Gastrocnemius medialis (tissue), 4 donors: ENCODE measurements at regions of chr1 and their contacts with region 1.

Region 1: DNA sequence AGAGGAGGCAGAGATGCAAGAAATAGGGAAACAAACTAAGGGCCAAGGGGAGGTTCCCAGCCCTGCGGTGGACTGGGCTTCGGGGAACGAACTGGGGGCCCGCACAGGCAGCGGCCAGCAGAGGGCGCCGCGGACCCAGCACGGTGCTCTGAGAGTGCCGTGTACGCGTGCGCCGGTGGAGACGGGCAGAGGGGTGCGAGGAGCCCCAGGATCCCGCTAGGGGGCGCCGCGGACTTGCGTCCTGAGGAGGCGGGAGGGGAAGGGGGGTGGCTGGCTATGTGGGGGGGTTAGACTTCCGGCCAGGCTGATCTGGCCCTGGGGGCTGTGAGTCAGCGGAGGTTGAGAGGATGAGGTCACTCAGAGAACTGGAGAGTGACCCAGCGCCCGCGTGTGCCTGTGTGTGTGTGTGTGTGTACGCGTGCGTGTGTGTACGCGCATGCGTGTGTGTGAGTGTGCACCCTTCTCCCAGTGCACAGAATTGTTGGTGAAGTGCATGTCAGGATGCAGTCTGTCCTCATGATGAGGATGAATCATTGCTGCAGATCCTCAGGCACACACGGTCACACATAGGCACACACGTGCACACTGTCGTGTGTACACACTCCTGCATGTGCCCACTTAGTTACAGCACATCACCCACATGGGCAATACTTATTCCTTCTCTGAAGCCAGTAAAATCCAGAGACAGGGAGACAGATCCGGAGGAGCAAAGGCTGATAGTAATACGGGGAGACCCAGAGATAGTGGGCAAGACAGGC is 17.0 kb downstream of the NES start:
- DNase-seq: peak; percentile 89 to 95
- ATAC-seq: peak; percentile 58 to 59
- H3K4me3 ChIP-seq: peak overlapping the region in 1 of 4 donors; percentile 46
- H3K27ac ChIP-seq: peak overlapping the region; percentile 91 to 97 (median 94)
- H3K4me1 ChIP-seq: peaks cover 72% of the 10 kb centered on the region in 2 donors
- H3K27me3 ChIP-seq: peaks cover 8 to 14% (median 14%) of the 10 kb centered on the region in 3 donors
- CTCF ChIP-seq: peak; percentile 99 to 100 (median 100)
- POLR2A ChIP-seq: no peak

Region 2: DNA sequence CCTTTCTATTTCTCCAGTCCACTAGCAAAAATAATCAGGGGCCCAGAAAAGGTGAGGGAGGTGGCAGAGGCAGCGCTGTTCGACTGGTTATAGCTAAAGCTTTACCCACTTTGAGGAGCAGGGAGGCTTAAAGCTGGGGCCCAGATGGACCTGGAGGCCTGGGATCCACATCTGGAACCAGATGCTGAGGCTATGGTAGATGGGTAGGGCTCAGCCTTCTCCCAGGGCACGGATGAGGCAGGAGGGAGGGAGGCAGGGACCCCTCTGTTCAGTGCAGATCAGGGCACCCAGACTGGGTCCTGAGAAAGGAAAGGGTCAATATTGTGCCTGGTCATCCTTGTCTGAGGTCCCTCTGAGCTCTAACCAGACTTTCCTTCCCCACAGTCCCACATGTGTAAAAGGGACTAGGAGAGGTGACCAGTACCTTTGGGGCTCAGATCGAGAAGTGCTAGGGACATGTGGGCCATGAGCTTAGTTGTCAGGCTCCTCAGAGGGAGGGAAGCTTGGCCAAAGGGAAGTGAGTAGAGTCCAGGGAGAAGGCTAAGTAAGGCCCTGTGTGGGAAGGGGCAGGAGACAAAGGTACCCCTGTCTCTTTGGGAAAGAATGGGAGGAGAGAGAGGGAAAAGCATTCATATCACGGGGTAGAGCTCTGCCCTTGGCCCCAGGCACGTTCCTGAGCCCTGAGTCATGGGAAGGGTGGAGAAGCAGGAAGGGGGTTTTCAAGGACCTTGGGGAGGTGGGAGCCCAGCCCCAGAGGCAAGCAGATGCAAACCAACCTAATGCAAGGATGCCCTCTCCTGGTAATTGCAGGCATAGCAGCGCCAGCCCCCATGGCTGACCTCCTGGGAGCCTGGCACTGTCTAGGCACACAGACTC is 530.2 kb before region 1 on chr1:
- in situ Hi-C with region 1: no loop called
- intact Hi-C with region 1: loop called (anchors 10 kb)
- DNase-seq: peak; percentile 64 to 88
- ATAC-seq: peak; percentile 59 to 79
- H3K4me3 ChIP-seq: peak overlapping the region in 2 of 4 donors; percentile 8 to 42
- H3K27ac ChIP-seq: peak overlapping the region; percentile 98 to 99 (median 98)
- H3K4me1 ChIP-seq: peaks cover 53 to 59% of the 10 kb centered on the region in 2 donors
- H3K27me3 ChIP-seq: no peaks in the 10 kb centered on the region
- CTCF ChIP-seq: peak; percentile 98 to 99 (median 99)
- POLR2A ChIP-seq: no peak

Region 3: GRCh38 chr1:156500797-156501499 is 159.2 kb before region 1 on chr1:
- in situ Hi-C with region 1: no loop called
- intact Hi-C with region 1: loop called (anchors 5 kb)
- DNase-seq: peak; percentile 94 to 96
- ATAC-seq: peak; percentile 35 to 37
- H3K4me3 ChIP-seq: peak overlapping the region; percentile 89 to 96 (median 93)
- H3K27ac ChIP-seq: peak overlapping the region; percentile 96 to 99 (median 98)
- H3K4me1 ChIP-seq: peaks cover 66 to 67% of the 10 kb centered on the region in 2 donors
- H3K27me3 ChIP-seq: no peaks in the 10 kb centered on the region
- CTCF ChIP-seq: peak in 4 of 5 experiments; percentile 54 to 67 (median 58)
- POLR2A ChIP-seq: no peak

Region 4: DNA sequence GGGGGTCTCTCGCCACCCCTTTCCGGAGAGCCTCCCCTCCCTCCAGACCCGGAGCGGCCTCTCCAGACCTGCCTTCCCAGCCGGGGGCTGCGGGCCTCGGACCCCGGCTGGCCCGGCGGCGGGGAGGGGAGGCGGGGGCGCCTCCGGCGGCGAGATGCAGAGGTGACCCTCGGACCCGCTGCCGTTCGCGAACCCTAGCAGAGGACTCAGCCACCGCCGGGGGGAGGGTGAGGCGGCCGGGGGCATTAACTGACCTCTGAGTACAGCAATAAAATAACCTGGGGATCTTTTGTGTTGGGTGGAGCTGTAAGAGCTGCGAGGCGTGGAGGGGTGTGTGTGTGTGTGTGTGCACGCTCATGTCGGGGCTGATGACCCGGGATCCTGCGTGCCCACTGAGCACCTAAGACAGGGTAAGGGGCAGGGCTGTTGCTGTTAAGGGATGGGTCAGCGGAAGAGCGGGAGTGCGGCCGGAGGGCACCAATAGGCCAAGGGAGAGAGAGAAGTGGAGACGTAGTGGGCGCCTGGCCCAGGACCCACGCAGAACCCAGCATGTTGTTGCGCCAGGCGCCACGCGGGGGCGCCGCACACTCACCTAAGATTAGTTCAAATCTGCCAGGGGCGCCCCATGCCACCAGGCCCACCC is 34.6 kb before region 1 on chr1:
- in situ Hi-C with region 1: no loop called
- intact Hi-C with region 1: loop called (anchors 1 kb)
- DNase-seq: peak in 1 of 2 donors; percentile 25
- ATAC-seq: peak; percentile 40 to 45
- H3K4me3 ChIP-seq: peak overlapping the region; percentile 45 to 56 (median 53)
- H3K27ac ChIP-seq: peak overlapping the region; percentile 55 to 71 (median 63)
- H3K4me1 ChIP-seq: peaks cover 11 to 18% of the 10 kb centered on the region in 2 donors
- H3K27me3 ChIP-seq: peaks cover 28 to 32% (median 30%) of the 10 kb centered on the region in 3 donors
- CTCF ChIP-seq: peak; percentile 77 to 93 (median 84)
- POLR2A ChIP-seq: no peak

Region 5: DNA sequence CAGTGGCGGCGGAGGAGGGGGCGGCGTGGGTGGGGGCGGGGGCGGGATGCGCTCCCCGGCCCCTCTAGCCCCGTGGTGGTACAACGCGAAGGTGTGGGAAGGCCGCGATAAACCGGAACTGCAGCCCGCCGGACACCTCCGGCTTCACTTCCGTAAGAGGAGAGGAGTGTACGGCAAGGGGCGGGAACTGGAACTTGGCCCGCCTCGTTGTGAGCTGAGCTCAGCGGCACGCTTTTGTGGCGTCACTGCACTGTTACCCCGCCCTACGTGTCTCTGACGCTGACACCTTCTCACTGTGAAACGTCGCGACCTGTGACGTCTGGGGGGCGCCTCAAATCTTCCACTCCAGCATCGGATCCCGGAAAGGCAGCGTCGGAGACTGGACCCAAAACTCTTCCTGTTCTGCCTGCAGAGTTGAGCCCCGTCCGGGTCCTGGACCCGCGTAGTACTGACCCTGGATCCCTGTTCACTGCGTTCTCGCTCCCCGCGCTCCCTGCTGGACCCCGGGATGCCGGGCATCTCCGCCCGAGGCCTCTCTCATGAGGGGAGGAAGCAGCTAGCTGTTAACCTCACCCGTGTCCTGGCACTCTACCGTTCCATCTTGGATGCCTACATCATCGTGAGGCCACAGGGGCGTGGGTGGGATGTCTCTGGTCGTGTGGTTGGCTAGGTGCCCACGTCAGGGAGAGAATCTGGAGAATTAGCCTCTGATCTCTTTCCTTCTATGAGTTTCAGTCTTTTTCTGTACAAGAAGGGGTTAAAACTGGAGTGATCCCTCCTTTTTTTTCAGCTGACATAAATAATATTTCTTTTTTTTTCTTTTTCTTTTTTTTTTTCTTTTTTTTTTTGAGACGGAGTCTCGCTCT is 68.7 kb after region 1 on chr1 and contains the start of gene ISG20L2:
- in situ Hi-C with region 1: no loop called
- intact Hi-C with region 1: loop called (anchors 1 kb)
- DNase-seq: peak; percentile 97
- ATAC-seq: peak; percentile 94 to 96
- H3K4me3 ChIP-seq: peak within 1 kb of the TSS; percentile 68 to 94 (median 84)
- H3K27ac ChIP-seq: peak within 1 kb of the TSS; percentile 91 to 98 (median 94)
- H3K4me1 ChIP-seq: peaks cover 35 to 37% of the 10 kb centered on the region in 2 donors
- H3K27me3 ChIP-seq: no peaks in the 10 kb centered on the region
- CTCF ChIP-seq: no peak
- POLR2A ChIP-seq: peak; percentile 14 to 48
- total RNA-seq, gene ISG20L2: 9.5 to 16.4 (median 15.1) TPM

Region 6: DNA sequence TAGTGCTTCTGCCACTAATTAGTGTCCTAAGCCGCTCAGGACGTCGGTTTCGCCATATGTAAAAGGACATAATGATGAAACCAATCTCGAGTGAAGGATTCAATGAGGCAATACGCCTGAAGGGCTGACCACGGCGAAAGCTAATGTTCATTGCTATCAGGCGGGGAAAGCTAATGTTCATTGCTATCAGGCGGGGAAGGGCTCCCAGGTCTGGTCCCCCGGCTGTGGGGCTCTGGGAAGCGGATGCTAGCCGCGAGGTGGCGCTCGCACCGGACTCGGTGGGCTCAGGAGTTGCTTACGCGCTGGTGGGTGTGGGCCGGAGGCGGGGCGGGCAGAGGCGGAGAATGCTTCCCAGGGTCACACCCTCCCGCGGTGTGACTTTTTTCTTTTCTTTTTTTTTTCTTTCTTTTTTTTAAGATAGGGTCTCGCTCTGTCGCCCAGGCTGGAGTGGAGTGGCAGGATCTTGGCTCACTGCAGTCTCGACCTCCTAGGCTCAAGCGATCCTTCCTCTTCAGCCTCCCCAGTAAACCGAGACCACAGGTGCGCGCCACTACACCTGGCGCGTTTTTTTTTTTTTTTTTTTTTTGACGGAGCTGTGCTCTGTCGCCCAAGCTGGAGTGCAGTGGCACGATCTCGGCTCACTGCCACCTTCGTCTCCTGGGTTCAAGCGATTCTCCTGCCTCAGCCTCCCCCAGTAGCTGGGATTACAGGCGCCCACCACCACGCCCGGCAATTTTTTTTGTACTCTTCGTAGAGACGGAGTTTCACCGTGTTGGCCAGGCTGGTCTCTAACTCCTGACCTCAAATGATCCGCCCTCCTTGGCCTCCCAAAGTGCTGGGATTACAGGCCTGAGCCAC is 232.2 kb after region 1 on chr1:
- in situ Hi-C with region 1: no loop called
- intact Hi-C with region 1: loop called (anchors 10 kb)
- DNase-seq: peak; percentile 70 to 76
- ATAC-seq: peak; percentile 70 to 78
- H3K4me3 ChIP-seq: peak overlapping the region; percentile 59 to 65 (median 62)
- H3K27ac ChIP-seq: peak overlapping the region; percentile 86 to 94 (median 90)
- H3K4me1 ChIP-seq: peaks cover 11 to 12% of the 10 kb centered on the region in 2 donors
- H3K27me3 ChIP-seq: peaks cover 6 to 19% (median 17%) of the 10 kb centered on the region in 3 donors
- CTCF ChIP-seq: peak; percentile 58 to 89 (median 71)
- POLR2A ChIP-seq: no peak

Region 7: DNA sequence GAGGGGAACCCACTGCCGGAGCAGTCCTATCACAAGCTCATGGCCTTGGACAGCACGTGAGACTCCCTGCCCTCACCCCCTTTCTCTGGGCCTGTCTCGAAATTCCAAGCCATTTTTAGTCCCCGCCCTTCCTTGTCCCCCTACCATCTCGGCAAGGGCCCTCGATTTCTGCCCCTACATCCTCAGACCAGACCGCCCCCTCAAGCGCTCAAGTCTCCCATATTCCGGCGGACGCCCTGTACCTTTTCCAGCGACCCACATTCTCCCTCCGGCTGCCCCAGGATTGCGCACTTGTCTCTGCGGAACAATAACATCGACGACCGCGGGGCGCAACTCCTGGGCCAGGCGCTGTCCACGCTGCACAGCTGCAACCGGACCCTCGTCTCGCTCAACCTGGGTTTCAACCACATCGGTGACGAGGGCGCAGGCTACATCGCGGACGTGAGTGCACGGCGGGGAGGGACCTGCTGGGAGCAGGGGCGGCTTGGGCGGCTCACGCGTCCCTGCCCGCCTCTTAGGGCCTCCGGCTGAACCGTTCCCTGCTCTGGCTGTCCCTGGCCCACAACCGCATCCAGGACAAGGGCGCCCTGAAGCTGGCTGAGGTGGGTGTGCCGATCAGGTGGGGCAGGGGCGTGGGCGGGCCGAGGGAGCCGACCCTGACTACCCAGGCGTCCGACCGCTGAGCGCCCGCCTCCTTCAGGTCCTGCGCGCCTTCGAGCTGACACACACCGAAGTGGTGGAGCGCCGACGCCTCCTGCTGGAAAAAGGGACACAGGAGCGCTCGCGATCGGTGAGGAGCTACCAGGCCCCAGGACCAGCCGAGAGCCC is 267.3 kb after region 1 on chr1:
- in situ Hi-C with region 1: no loop called
- intact Hi-C with region 1: no loop called
- DNase-seq: peak; percentile 30 to 34
- ATAC-seq: peak in 1 of 2 donors; percentile 26
- H3K4me3 ChIP-seq: peak overlapping the region in 3 of 4 donors; percentile 27 to 40 (median 34)
- H3K27ac ChIP-seq: no peak overlapping the region
- H3K4me1 ChIP-seq: peaks cover 3 to 13% of the 10 kb centered on the region in 2 donors
- H3K27me3 ChIP-seq: peaks cover 61 to 66% (median 63%) of the 10 kb centered on the region in 3 donors
- CTCF ChIP-seq: peak; percentile 22 to 60 (median 46)
- POLR2A ChIP-seq: no peak